Right cardiac atrium (tissue), 5 donors: ENCODE measurements at regions of chr1 and their contacts with region 1.

Region 1: DNA sequence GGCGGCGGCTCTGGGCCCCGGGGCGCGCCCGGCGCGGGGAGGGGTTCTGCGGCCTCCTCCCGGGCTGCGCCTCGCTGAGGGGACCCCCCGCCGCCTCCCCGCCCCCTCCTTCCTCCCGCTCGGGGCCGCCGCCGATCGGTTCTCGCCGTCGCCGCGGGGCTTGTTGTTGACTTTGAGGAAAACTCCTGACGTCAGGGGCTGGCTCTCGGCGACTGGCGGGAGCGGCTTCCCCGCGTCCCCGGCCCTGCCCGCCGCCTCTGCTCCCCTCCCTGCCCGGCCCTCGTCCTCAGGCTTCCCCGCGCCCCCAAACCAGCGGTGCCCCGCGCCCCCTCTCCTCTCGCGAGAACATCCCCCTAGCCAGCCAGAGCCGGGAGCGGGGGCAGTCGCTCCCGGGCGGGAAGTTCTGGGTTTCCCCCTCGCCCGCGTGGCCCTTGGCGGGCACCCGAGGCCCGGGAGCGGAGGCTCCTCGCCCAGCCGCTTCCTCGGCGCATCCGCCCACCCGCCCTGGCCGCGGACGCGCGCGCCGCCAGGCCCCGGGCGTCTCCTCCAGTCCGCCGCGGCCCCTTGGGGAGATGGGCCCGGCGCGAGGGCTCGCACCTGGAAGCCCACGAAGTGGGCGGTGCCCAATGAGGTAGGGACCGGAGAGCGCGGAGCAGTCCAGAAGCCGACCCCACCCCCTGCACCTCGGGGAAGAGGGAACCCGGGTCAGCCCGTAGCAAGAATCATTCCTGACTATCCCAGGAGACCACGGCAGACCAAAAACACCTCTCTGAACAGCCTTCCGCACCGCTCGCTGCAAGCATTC is 611 bp upstream of the AKT3 start:
- DNase-seq: peak; percentile 83 to 93 (median 92)
- ATAC-seq: peak; percentile 75 to 81
- H3K4me3 ChIP-seq: peak overlapping the region; percentile 69
- H3K27ac ChIP-seq: peak overlapping the region; percentile 93
- H3K4me1 ChIP-seq: no peaks in the 10 kb centered on the region
- H3K27me3 ChIP-seq: no peaks in the 10 kb centered on the region

Region 2: DNA sequence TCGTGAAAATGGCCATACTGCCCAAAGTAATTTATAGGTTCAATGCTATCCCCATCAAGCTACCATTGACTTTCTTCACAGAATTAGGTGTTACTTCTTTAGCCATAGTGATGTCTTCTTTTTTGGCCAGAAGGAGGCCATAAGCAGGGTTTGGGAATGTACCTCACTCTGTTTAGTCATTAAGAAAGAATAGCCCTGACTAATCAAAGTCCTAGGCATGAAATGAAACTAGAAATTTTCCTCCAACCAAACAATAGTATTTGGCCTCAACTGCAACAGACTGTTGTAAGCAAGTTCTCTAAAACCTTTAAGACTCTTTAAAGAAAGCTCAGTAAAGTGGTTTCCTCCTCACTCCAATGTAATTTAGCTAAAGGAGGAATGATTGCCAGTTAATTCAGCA is 164.5 kb before region 1 on chr1:
- intact Hi-C with region 1: no loop called
- DNase-seq: no peak
- ATAC-seq: no peak
- H3K4me3 ChIP-seq: no peak overlapping the region
- H3K27ac ChIP-seq: no peak overlapping the region
- H3K4me1 ChIP-seq: no peaks in the 10 kb centered on the region
- H3K27me3 ChIP-seq: no peaks in the 10 kb centered on the region

Region 3: DNA sequence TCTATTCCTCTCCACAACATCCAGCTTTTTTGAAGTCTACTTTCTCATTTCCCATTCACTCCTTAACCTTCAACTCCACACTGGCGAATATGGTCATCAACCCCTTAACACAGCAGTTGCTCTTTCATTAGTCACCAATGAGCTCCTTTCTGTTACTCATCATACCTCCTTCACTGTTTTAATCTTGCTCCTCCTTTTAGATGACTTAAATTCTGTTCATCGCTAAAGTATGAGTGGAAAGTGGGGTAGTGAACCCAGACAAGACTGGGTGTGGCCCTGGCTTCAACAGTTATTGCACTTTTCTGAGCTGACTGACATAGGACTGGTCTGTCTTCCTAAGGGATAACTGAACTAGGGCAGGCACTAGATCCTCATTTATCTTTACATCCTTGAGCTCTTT is 51.9 kb before region 1 on chr1:
- intact Hi-C with region 1: loop called in 1 of 4 experiments (anchors 10 kb)
- DNase-seq: no peak
- ATAC-seq: no peak
- H3K4me3 ChIP-seq: no peak overlapping the region
- H3K27ac ChIP-seq: no peak overlapping the region
- H3K4me1 ChIP-seq: peaks cover 6% of the 10 kb centered on the region
- H3K27me3 ChIP-seq: no peaks in the 10 kb centered on the region

Region 4: DNA sequence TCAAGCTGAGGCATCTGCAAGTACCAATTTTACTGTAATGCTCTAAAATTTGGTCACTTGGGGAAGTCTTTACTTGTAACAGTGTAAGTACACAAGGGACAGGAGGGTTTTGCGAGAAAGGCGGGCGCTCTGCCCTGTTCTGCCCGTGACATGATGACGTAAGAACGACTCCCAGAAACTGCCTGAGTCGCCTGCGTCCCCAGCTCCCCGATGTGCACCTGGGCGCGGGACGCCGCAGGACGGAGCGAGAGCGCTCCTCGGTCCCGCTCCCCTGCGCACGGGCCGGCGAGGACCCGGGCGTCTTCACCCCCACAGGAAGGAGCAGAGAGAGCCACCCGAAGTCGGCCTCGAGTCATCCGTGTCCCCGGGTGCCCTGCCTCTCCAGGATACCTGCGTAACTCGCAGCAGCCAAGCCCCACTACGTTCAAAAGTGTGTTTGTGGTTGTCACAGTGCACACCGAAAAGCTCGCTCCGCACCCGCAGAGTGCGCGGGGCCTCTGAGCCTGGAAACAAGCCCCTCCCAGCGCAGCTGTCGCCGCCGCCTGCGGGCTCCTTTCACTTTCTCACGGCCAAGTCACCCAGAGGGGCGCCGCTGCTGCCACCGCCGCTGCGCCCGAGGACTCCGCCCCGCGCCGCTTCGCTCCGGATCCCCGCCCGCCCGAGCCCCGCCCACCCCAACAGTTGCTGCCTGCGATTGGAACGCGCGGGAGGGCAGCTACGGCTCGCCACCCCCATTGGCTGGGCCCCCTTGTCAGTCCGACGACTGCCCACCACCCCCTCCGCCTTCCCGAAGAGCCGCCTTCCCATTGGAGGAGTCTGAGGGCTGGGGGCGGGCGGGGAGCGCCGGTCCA is 197.2 kb after region 1 on chr1:
- intact Hi-C with region 1: loop called in 1 of 4 experiments (anchors 5 kb)
- DNase-seq: peak; percentile 99 to 100 (median 99)
- ATAC-seq: peak; percentile 98 to 99
- H3K4me3 ChIP-seq: peak overlapping the region; percentile 61
- H3K27ac ChIP-seq: peak overlapping the region; percentile 94
- H3K4me1 ChIP-seq: peaks cover 2% of the 10 kb centered on the region
- H3K27me3 ChIP-seq: no peaks in the 10 kb centered on the region